CD4-positive, alpha-beta memory T cell (primary cell): ENCODE measurements at regions of chr11 and their contacts with region 1.

Region 1: DNA sequence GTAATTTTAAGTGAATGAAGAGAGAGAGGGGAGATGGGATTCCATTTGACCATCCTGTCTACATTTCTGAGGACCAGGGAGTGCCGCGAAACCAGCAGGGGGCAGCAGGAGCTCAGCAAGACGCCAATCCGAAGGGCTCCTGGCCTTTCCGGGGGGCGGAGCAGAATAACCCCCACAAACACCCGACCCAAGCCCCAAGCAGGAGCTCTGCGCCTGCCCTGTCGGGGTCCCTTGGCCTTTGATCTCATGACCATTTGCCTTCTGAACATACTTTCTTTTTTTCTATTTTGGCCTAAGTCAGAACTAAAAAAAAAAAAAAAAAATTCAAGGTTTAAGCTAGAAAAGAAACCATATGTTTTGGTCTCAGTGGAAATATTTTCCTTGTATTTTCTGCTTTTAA is 21.9 kb upstream of the SCN2B start:
- DNase-seq: peak; percentile 69 to 81 (median 76)
- H3K4me3 ChIP-seq: no peak overlapping the region
- H3K4me3 Mint-ChIP-seq: peak overlapping the region in 7 of 8 donors; percentile 13 to 70 (median 47)
- H3K27ac ChIP-seq: peak overlapping the region; percentile 27
- H3K27ac Mint-ChIP-seq: peak overlapping the region in 6 of 7 donors; percentile 26 to 93 (median 77)
- H3K4me1 ChIP-seq: peaks cover 47% of the 10 kb centered on the region
- H3K4me1 Mint-ChIP-seq: peaks cover 3 to 14% (median 9%) of the 10 kb centered on the region in 4 donors
- H3K27me3 ChIP-seq: no peaks in the 10 kb centered on the region
- H3K27me3 Mint-ChIP-seq: no peaks in the 10 kb centered on the region

Region 2: GRCh38 chr11:118015385-118015841 is 183.0 kb before region 1 on chr11:
- CTCF ChIA-PET with region 1: no interaction called
- POLR2A ChIA-PET with region 1: no interaction called
- intact Hi-C with region 1: no loop called
- DNase-seq: no peak
- H3K4me3 ChIP-seq: peak overlapping the region in 1 of 2 donors; percentile 13
- H3K4me3 Mint-ChIP-seq: peak overlapping the region in 7 of 8 donors; percentile 51 to 82 (median 69)
- H3K27ac ChIP-seq: no peak overlapping the region
- H3K27ac Mint-ChIP-seq: peak overlapping the region; percentile 77 to 93 (median 82)
- H3K4me1 ChIP-seq: peaks cover 68% of the 10 kb centered on the region
- H3K4me1 Mint-ChIP-seq: peaks cover 41 to 72% (median 60%) of the 10 kb centered on the region in 4 donors
- H3K27me3 ChIP-seq: no peaks in the 10 kb centered on the region
- H3K27me3 Mint-ChIP-seq: no peaks in the 10 kb centered on the region

Region 3: GRCh38 chr11:118211006-118211405 is 12.6 kb after region 1 on chr11:
- CTCF ChIA-PET with region 1: interaction called, 51 read pairs
- POLR2A ChIA-PET with region 1: interaction called, 83 read pairs
- intact Hi-C with region 1: loop called (anchors 2 kb)
- DNase-seq: no peak
- H3K4me3 ChIP-seq: no peak overlapping the region
- H3K4me3 Mint-ChIP-seq: no peak overlapping the region
- H3K27ac ChIP-seq: no peak overlapping the region
- H3K27ac Mint-ChIP-seq: peak overlapping the region in 2 of 7 donors; percentile 19 to 68
- H3K4me1 ChIP-seq: peaks cover 44% of the 10 kb centered on the region
- H3K4me1 Mint-ChIP-seq: peaks cover 44 to 57% (median 51%) of the 10 kb centered on the region in 4 donors
- H3K27me3 ChIP-seq: no peaks in the 10 kb centered on the region
- H3K27me3 Mint-ChIP-seq: no peaks in the 10 kb centered on the region

Region 4: DNA sequence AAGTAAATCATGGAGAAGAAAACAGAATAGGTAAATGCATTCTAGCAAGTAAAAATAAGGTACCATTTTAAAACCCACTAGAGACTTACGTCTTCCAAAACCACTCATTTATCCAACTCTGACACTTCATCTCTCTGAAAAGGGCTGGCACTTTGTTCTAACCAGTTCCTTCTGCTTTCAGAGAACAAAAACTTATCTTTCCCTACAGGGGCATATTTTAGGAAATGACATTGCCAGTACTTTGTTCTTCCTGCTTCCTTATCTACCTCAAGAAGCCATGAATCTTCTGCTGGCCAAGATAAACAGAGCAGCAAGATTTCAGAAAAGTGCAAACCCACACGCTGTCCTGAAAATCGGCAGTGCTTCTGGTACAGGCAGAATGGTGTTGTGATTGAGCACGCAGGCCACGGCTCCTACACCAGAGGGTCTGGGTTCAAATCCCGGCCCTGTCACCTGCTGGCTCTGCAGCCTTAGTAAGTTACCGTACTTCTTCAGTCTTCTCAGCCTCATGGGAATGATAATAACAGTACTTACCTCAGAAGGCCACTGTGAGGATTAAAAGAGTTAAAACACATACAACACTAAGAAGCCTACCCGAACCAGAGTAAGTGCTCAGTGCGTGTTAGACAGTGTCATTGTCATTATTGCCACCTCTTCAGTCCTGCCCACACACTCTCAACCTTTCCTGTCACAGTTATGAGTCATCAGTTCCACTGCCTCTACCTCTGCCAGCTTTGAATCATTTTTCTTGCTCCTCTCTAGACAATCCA is 42.8 kb after region 1 on chr11:
- CTCF ChIA-PET with region 1: interaction called, 36 read pairs
- POLR2A ChIA-PET with region 1: interaction called, 43 read pairs
- intact Hi-C with region 1: loop called (anchors 2 kb)
- DNase-seq: peak; percentile 59 to 91 (median 67)
- H3K4me3 ChIP-seq: peak overlapping the region in 1 of 2 donors; percentile 21
- H3K4me3 Mint-ChIP-seq: peak overlapping the region; percentile 46 to 79 (median 72)
- H3K27ac ChIP-seq: peak overlapping the region; percentile 65
- H3K27ac Mint-ChIP-seq: peak overlapping the region; percentile 87 to 98 (median 93)
- H3K4me1 ChIP-seq: peaks cover 68% of the 10 kb centered on the region
- H3K4me1 Mint-ChIP-seq: peaks cover 64 to 83% (median 74%) of the 10 kb centered on the region in 4 donors
- H3K27me3 ChIP-seq: no peaks in the 10 kb centered on the region
- H3K27me3 Mint-ChIP-seq: no peaks in the 10 kb centered on the region

Region 5: GRCh38 chr11:118263695-118264567 is 65.6 kb after region 1 on chr11 and contains the start of gene MPZL2:
- CTCF ChIA-PET with region 1: interaction called, 71 read pairs
- POLR2A ChIA-PET with region 1: interaction called, 7 read pairs
- intact Hi-C with region 1: no loop called
- DNase-seq: peak in 1 of 5 donors; percentile 48
- H3K4me3 ChIP-seq: peak within 1 kb of the TSS in 1 of 2 donors; percentile 13
- H3K4me3 Mint-ChIP-seq: peak within 1 kb of the TSS; percentile 61 to 89 (median 84)
- H3K27ac ChIP-seq: no peak within 1 kb of the TSS
- H3K27ac Mint-ChIP-seq: peak within 1 kb of the TSS in 6 of 7 donors; percentile 39 to 89 (median 74)
- H3K4me1 ChIP-seq: peaks cover 29% of the 10 kb centered on the region
- H3K4me1 Mint-ChIP-seq: peaks cover 11 to 44% (median 23%) of the 10 kb centered on the region in 4 donors
- H3K27me3 ChIP-seq: no peaks in the 10 kb centered on the region
- H3K27me3 Mint-ChIP-seq: peaks cover 0 to 1% of the 10 kb centered on the region in 2 donors
- total RNA-seq, gene MPZL2: 2.9 to 3.7 TPM

Region 6: GRCh38 chr11:118295834-118296454 is 97.6 kb after region 1 on chr11:
- CTCF ChIA-PET with region 1: interaction called, 138 read pairs
- POLR2A ChIA-PET with region 1: interaction called, 17 read pairs
- intact Hi-C with region 1: loop called (anchors 1 kb)
- DNase-seq: peak; percentile 46 to 59 (median 52)
- H3K4me3 ChIP-seq: no peak overlapping the region
- H3K4me3 Mint-ChIP-seq: peak overlapping the region in 1 of 8 donors; percentile 11
- H3K27ac ChIP-seq: no peak overlapping the region
- H3K27ac Mint-ChIP-seq: peak overlapping the region; percentile 0 to 88 (median 72)
- H3K4me1 ChIP-seq: peaks cover 9% of the 10 kb centered on the region
- H3K4me1 Mint-ChIP-seq: peaks cover 10 to 22% (median 14%) of the 10 kb centered on the region in 4 donors
- H3K27me3 ChIP-seq: no peaks in the 10 kb centered on the region
- H3K27me3 Mint-ChIP-seq: no peaks in the 10 kb centered on the region

Region 7: GRCh38 chr11:118488480-118489109 is 290.2 kb after region 1 on chr11:
- CTCF ChIA-PET with region 1: interaction called, 6 read pairs
- POLR2A ChIA-PET with region 1: no interaction called
- intact Hi-C with region 1: loop called (anchors 1 kb)
- DNase-seq: peak; percentile 79 to 83 (median 81)
- H3K4me3 ChIP-seq: no peak overlapping the region
- H3K4me3 Mint-ChIP-seq: no peak overlapping the region
- H3K27ac ChIP-seq: peak overlapping the region; percentile 10
- H3K27ac Mint-ChIP-seq: peak overlapping the region; percentile 1 to 79 (median 13)
- H3K4me1 ChIP-seq: no peaks in the 10 kb centered on the region
- H3K4me1 Mint-ChIP-seq: peaks cover 0 to 5% (median 4%) of the 10 kb centered on the region in 4 donors
- H3K27me3 ChIP-seq: no peaks in the 10 kb centered on the region
- H3K27me3 Mint-ChIP-seq: no peaks in the 10 kb centered on the region